Vagina (tissue), 2 donors: ENCODE measurements at regions of chr2 and their contacts with region 1.

Region 1: GRCh38 chr2:231706731-231707624 is 1.3 kb upstream of the PTMA start:
- DNase-seq: peak in 1 of 2 donors; percentile 99
- H3K4me3 ChIP-seq: peak overlapping the region; percentile 89 to 100
- H3K27ac ChIP-seq: peak overlapping the region; percentile 100
- H3K4me1 ChIP-seq: peaks cover 34% of the 10 kb centered on the region
- H3K27me3 ChIP-seq: no peaks in the 10 kb centered on the region
- CTCF ChIP-seq: peak; percentile 60 to 86 (median 70)
- POLR2A ChIP-seq: peak in 1 of 2 donors; percentile 94

Region 2: GRCh38 chr2:231680992-231681853 is 25.8 kb before region 1 on chr2:
- intact Hi-C with region 1: loop called (anchors 1 kb)
- DNase-seq: no peak
- H3K4me3 ChIP-seq: peak overlapping the region; percentile 54 to 61
- H3K27ac ChIP-seq: peak overlapping the region; percentile 95
- H3K4me1 ChIP-seq: peaks cover 19% of the 10 kb centered on the region
- H3K27me3 ChIP-seq: no peaks in the 10 kb centered on the region
- CTCF ChIP-seq: no peak
- POLR2A ChIP-seq: peak in 1 of 2 donors; percentile 26

Region 3: DNA sequence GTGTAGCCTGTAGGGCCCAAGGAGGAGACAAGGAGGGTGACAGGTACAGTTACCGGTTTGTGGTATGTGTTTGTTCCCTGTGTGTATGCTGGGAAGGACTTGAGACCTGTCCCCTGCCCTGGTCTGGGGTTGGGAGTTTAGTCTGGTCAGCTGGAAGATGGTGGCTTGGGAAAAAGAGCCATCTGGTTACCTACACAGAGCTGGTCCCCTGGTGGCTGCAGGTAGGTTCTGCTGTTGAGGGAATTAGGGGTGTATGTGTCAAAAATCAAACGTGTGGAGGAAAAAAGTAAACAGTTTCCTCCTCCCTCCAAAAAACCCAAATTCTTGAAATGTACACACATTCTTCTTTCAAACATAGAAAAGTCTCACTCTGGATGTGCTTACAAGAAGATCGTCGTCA is 25.6 kb after region 1 on chr2:
- intact Hi-C with region 1: no loop called
- DNase-seq: no peak
- H3K4me3 ChIP-seq: no peak overlapping the region
- H3K27ac ChIP-seq: no peak overlapping the region
- H3K4me1 ChIP-seq: no peaks in the 10 kb centered on the region
- H3K27me3 ChIP-seq: no peaks in the 10 kb centered on the region
- CTCF ChIP-seq: no peak
- POLR2A ChIP-seq: no peak